Gastrocnemius medialis (tissue), 4 donors: ENCODE measurements at regions of chr2 and their contacts with region 1.

Region 1: DNA sequence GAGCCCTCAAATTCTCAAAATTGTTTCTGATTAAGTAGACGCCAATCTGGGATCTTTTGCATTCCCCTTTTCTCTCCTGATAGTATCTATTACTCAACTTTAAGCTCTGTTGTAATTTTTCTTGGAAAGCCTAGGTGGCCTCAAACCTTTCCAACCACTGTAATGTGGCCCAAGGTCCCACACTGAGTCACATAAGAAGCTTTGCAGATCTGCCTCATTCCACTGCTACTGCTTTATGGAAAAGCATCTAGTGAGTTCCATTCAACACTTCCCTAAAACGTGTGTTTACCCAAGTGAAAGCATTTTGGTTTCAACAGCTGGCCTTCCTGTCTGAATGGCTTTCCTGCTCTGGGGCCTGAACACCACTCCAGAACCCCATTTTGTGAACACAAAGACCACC is 493.6 kb upstream of the SPHKAP start:
- DNase-seq: peak; percentile 18 to 41
- ATAC-seq: peak; percentile 74 to 77
- H3K4me3 ChIP-seq: no peak overlapping the region
- H3K27ac ChIP-seq: peak overlapping the region in 3 of 4 donors; percentile 22 to 48 (median 39)
- H3K4me1 ChIP-seq: no peaks in the 10 kb centered on the region
- H3K27me3 ChIP-seq: no peaks in the 10 kb centered on the region
- CTCF ChIP-seq: no peak
- POLR2A ChIP-seq: no peak

Region 2: DNA sequence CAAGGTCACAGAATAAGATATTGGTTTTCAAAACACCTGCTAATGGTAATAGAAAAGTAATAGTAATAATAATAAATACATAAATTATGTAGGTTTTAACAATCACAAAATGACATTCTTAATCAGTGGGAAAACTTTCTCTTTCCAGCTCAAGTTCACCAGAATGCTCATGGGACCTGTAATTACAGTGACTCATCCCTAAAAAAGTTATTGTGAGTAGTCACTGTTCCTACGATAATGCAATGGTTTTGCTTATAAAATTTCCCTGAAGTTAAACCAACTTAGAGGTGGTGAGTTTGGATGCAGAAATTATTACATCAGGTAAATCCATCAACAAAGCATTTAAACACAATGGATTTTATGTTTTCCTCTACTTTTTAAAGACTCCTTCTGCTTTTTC is 93.7 kb after region 1 on chr2:
- in situ Hi-C with region 1: loop called in 1 of 4 experiments (anchors 10 kb)
- intact Hi-C with region 1: no loop called
- DNase-seq: no peak
- ATAC-seq: peak; percentile 28 to 58
- H3K4me3 ChIP-seq: no peak overlapping the region
- H3K27ac ChIP-seq: peak overlapping the region; percentile 65 to 73 (median 67)
- H3K4me1 ChIP-seq: peaks cover 0 to 5% of the 10 kb centered on the region in 2 donors
- H3K27me3 ChIP-seq: no peaks in the 10 kb centered on the region
- CTCF ChIP-seq: no peak
- POLR2A ChIP-seq: no peak

Region 3: GRCh38 chr2:228819701-228820100 is 144.6 kb after region 1 on chr2:
- in situ Hi-C with region 1: no loop called
- intact Hi-C with region 1: no loop called
- DNase-seq: no peak
- ATAC-seq: no peak
- H3K4me3 ChIP-seq: no peak overlapping the region
- H3K27ac ChIP-seq: no peak overlapping the region
- H3K4me1 ChIP-seq: no peaks in the 10 kb centered on the region
- H3K27me3 ChIP-seq: no peaks in the 10 kb centered on the region
- CTCF ChIP-seq: no peak
- POLR2A ChIP-seq: no peak